ENCODE measurements at regions of chr19 and their contacts with region 1.

Region 1: GRCh38 chr19:52734893-52735661 is at the start of gene ZNF611:
- DNase-seq: peak; percentile 98 to 100 (median 100)
- ATAC-seq: peak; percentile 96
- H3K4me3 ChIP-seq: peak within 1 kb of the TSS; percentile 87 to 92
- H3K4me3 Mint-ChIP-seq: peak within 1 kb of the TSS; percentile 92
- H3K27ac ChIP-seq: peak within 1 kb of the TSS; percentile 88 to 90
- H3K27ac Mint-ChIP-seq: peak within 1 kb of the TSS; percentile 95
- H3K4me1 ChIP-seq: peaks cover 11% of the 10 kb centered on the region
- H3K4me1 Mint-ChIP-seq: peaks cover 30% of the 10 kb centered on the region
- H3K27me3 ChIP-seq: no peaks in the 10 kb centered on the region
- H3K27me3 Mint-ChIP-seq: no peaks in the 10 kb centered on the region
- CTCF ChIP-seq: peak; percentile 61
- total RNA-seq, gene ZNF611: 22.4 to 23.0 TPM

Region 2: GRCh38 chr19:52296773-52297600 is 438.1 kb before region 1 on chr19 and contains the start of gene ZNF480:
- CTCF ChIA-PET with region 1: no interaction called
- POLR2A ChIA-PET with region 1: no interaction called
- intact Hi-C with region 1: loop called in 1 of 2 experiments (anchors 2 kb)
- DNase-seq: peak; percentile 73 to 94 (median 89)
- ATAC-seq: peak; percentile 92
- H3K4me3 ChIP-seq: peak within 1 kb of the TSS; percentile 96 to 97
- H3K4me3 Mint-ChIP-seq: peak within 1 kb of the TSS; percentile 97
- H3K27ac ChIP-seq: peak within 1 kb of the TSS; percentile 93 to 98
- H3K27ac Mint-ChIP-seq: peak within 1 kb of the TSS; percentile 99
- H3K4me1 ChIP-seq: peaks cover 7% of the 10 kb centered on the region
- H3K4me1 Mint-ChIP-seq: peaks cover 20% of the 10 kb centered on the region
- H3K27me3 ChIP-seq: no peaks in the 10 kb centered on the region
- H3K27me3 Mint-ChIP-seq: no peaks in the 10 kb centered on the region
- CTCF ChIP-seq: no peak
- total RNA-seq, gene ZNF480: 7.8 to 9.1 TPM

Region 3: DNA sequence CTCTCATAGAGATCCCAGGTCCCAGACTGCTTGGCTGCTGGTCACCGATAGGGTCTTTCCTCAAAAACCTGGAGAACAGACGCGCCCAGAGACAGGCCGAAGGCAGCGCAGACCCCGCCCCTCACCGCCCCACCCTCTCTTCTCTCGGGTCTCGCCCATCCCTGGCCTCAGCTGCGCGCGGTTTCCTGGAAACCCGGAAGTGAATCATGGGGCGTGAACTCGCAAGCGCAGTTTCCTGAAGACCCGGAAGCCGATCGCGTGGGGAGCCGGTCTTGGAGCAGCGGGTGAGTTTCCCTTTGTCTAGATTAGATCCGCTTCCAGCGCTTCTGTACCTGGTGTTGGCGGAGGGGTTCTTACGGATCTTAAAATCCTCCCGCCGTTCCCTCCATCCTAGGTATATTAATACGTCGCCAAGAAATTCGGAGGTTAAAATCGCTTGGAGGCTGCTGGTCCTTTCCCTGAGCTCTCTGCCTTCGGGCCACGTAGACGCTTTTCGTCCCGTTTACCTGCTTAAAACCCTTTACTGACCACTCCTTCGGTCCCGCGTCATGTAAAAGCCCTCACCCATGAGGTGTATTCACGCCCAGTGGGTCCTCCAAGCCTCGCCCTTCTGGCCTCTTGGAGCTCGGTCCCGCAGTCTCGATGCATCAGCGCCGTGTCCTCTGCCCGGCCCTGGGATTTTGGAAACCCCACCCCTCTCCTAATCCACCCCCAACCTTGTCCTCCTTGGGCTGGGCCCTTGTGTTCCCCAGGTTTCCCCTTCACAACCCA is 281.6 kb before region 1 on chr19 and contains the start of gene ZNF578:
- CTCF ChIA-PET with region 1: no interaction called
- POLR2A ChIA-PET with region 1: no interaction called
- intact Hi-C with region 1: no loop called
- DNase-seq: peak; percentile 22 to 77 (median 65)
- ATAC-seq: peak; percentile 88
- H3K4me3 ChIP-seq: peak within 1 kb of the TSS; percentile 44 to 59
- H3K4me3 Mint-ChIP-seq: peak within 1 kb of the TSS; percentile 87
- H3K27ac ChIP-seq: peak within 1 kb of the TSS in 1 of 2 experiments; percentile 38
- H3K27ac Mint-ChIP-seq: peak within 1 kb of the TSS; percentile 82
- H3K4me1 ChIP-seq: no peaks in the 10 kb centered on the region
- H3K4me1 Mint-ChIP-seq: peaks cover 16% of the 10 kb centered on the region
- H3K27me3 ChIP-seq: peaks cover 0 to 2% of the 10 kb centered on the region in 2 experiments
- H3K27me3 Mint-ChIP-seq: peaks cover 8% of the 10 kb centered on the region
- CTCF ChIP-seq: no peak
- total RNA-seq, gene ZNF578: 1.5 to 1.8 TPM

Region 4: GRCh38 chr19:52570000-52570861 is 164.8 kb before region 1 on chr19 and contains the start of gene ZNF701:
- CTCF ChIA-PET with region 1: no interaction called
- POLR2A ChIA-PET with region 1: no interaction called
- intact Hi-C with region 1: loop called in 1 of 2 experiments (anchors 1 kb)
- DNase-seq: peak; percentile 93 to 97 (median 95)
- ATAC-seq: peak; percentile 98
- H3K4me3 ChIP-seq: peak within 1 kb of the TSS; percentile 81 to 96
- H3K4me3 Mint-ChIP-seq: peak within 1 kb of the TSS; percentile 90
- H3K27ac ChIP-seq: peak within 1 kb of the TSS; percentile 77 to 91
- H3K27ac Mint-ChIP-seq: peak within 1 kb of the TSS; percentile 93
- H3K4me1 ChIP-seq: peaks cover 12% of the 10 kb centered on the region
- H3K4me1 Mint-ChIP-seq: peaks cover 42% of the 10 kb centered on the region
- H3K27me3 ChIP-seq: no peaks in the 10 kb centered on the region
- H3K27me3 Mint-ChIP-seq: no peaks in the 10 kb centered on the region
- CTCF ChIP-seq: peak; percentile 30
- total RNA-seq, gene ZNF701: 11.2 to 11.9 TPM

Region 5: DNA sequence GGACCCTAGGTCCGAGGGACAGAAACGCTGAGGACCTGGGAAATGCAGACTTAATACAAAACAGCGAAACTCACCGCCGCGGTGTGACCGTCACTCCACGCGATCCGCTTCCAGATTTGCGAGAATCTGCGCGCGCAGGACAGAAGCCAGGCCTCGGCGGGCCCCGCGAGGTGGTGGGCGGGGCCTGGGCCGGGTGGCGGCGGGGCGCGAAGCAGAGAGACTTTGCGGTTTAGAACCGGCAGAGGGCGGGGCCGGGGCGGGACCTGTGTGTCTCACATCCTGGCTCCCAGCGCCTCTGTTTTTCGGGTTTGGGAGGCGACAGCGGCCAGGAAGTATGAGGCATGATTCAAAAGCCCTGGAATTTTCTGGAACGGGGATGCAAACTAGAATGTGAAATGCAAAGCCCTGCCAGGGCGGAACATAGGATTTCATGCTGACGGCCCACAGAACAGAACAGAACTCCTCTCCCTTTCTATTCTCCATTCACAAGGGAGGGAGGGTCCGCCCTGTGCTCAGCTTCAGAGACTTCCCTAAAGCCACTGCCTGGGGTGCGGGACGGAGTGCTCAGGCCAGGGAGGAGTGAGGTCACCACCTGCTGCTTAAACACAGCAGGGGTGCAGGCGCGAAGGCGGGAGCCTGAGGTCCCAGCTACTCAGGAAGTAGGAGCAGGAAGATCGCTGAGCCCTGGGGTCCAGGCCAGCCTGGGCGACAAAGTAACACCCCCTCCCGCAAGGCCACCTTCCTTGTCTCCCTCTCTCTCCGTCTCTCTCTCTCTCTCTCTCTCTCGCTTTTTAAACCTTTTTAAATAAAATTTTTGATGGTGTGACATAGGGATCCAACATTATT is 44.5 kb before region 1 on chr19:
- CTCF ChIA-PET with region 1: no interaction called
- POLR2A ChIA-PET with region 1: no interaction called
- intact Hi-C with region 1: loop called (anchors 1 kb)
- DNase-seq: peak; percentile 75 to 94 (median 93)
- ATAC-seq: peak; percentile 97
- H3K4me3 ChIP-seq: peak overlapping the region; percentile 84 to 94
- H3K4me3 Mint-ChIP-seq: peak overlapping the region; percentile 92
- H3K27ac ChIP-seq: peak overlapping the region; percentile 58 to 87
- H3K27ac Mint-ChIP-seq: peak overlapping the region; percentile 95
- H3K4me1 ChIP-seq: peaks cover 16% of the 10 kb centered on the region
- H3K4me1 Mint-ChIP-seq: peaks cover 31% of the 10 kb centered on the region
- H3K27me3 ChIP-seq: no peaks in the 10 kb centered on the region
- H3K27me3 Mint-ChIP-seq: no peaks in the 10 kb centered on the region
- CTCF ChIP-seq: no peak

Region 6: GRCh38 chr19:52853880-52854279 is 118.8 kb after region 1 on chr19:
- CTCF ChIA-PET with region 1: no interaction called
- POLR2A ChIA-PET with region 1: no interaction called
- intact Hi-C with region 1: loop called in 1 of 2 experiments (anchors 1 kb)
- DNase-seq: no peak
- ATAC-seq: no peak
- H3K4me3 ChIP-seq: no peak overlapping the region
- H3K4me3 Mint-ChIP-seq: no peak overlapping the region
- H3K27ac ChIP-seq: no peak overlapping the region
- H3K27ac Mint-ChIP-seq: no peak overlapping the region
- H3K4me1 ChIP-seq: peaks cover 5% of the 10 kb centered on the region
- H3K4me1 Mint-ChIP-seq: peaks cover 29% of the 10 kb centered on the region
- H3K27me3 ChIP-seq: no peaks in the 10 kb centered on the region
- H3K27me3 Mint-ChIP-seq: no peaks in the 10 kb centered on the region
- CTCF ChIP-seq: no peak

Region 7: GRCh38 chr19:52942386-52943133 is 207.5 kb after region 1 on chr19:
- CTCF ChIA-PET with region 1: no interaction called
- POLR2A ChIA-PET with region 1: interaction called, 3 read pairs
- intact Hi-C with region 1: loop called in 1 of 2 experiments (anchors 5 kb)
- DNase-seq: peak; percentile 91 to 97 (median 95)
- ATAC-seq: peak; percentile 99
- H3K4me3 ChIP-seq: peak overlapping the region; percentile 88 to 91
- H3K4me3 Mint-ChIP-seq: peak overlapping the region; percentile 95
- H3K27ac ChIP-seq: peak overlapping the region; percentile 66 to 86
- H3K27ac Mint-ChIP-seq: peak overlapping the region; percentile 93
- H3K4me1 ChIP-seq: peaks cover 7% of the 10 kb centered on the region
- H3K4me1 Mint-ChIP-seq: peaks cover 28% of the 10 kb centered on the region
- H3K27me3 ChIP-seq: no peaks in the 10 kb centered on the region
- H3K27me3 Mint-ChIP-seq: no peaks in the 10 kb centered on the region
- CTCF ChIP-seq: no peak

Region 8: DNA sequence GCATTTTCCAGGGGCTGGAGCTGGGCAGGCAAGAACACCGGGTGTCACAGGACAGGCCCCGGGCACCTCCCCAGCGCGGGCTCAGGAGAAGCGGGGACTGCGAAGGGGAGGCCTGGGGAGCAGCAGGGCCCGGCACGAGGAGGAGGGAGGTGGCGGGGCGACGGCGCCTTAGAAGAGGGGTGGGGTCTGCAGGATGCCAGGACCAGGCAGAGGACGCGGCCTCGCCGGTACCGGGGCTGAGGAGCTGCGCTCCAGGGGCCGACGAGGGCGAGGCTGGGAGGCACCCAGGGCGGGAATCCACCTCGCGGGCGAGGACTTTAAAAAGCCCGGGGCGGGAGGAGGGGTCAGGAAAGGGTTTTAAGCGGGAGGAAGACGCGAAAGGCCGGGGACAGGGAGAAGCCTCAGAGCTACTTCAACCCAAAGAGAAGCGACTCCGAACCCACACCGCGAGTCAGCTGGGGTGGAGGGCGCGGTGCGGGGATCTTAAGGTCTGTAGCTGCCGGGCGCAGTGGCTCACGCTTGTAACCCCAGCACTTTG is 423.1 kb after region 1 on chr19:
- CTCF ChIA-PET with region 1: no interaction called
- POLR2A ChIA-PET with region 1: no interaction called
- intact Hi-C with region 1: no loop called
- DNase-seq: peak in 7 of 9 experiments; percentile 4 to 63 (median 47)
- ATAC-seq: peak; percentile 42
- H3K4me3 ChIP-seq: peak overlapping the region; percentile 59 to 60
- H3K4me3 Mint-ChIP-seq: peak overlapping the region; percentile 77
- H3K27ac ChIP-seq: peak overlapping the region; percentile 44 to 52
- H3K27ac Mint-ChIP-seq: peak overlapping the region; percentile 79
- H3K4me1 ChIP-seq: peaks cover 13% of the 10 kb centered on the region
- H3K4me1 Mint-ChIP-seq: peaks cover 23% of the 10 kb centered on the region
- H3K27me3 ChIP-seq: no peaks in the 10 kb centered on the region
- H3K27me3 Mint-ChIP-seq: no peaks in the 10 kb centered on the region
- CTCF ChIP-seq: no peak

Measured in CD8-positive, alpha-beta T cell (primary cell).